Activated CD8-positive, alpha-beta T cell treated with anti-CD3 and anti-CD28 coated beads for 36 hours (primary cell): ENCODE measurements at regions of chr2 and their contacts with region 1.

Region 1: DNA sequence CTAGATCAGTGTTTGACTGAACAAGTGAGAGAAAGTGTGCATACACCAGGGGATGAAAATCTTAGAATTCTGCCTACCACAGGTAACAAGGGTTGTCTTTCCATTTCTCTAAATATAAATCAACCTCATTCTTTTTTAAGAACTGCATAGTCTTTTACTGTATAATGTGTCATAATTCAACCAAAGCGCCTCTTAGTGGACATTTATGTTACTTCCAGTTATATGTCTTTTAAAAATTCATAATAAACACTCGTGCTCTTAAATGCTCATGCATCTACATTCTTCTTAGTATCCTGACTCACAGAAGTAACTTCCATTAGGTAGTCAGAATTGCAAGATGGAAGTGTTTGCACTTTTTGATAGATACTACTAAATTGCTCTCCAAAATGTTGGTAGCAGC is 76.2 kb downstream of the CHRNA1 start:
- DNase-seq: no peak
- ATAC-seq: peak; percentile 69
- H3K4me3 Mint-ChIP-seq: no peak overlapping the region
- H3K27ac Mint-ChIP-seq: no peak overlapping the region
- H3K4me1 Mint-ChIP-seq: peaks cover 42% of the 10 kb centered on the region
- H3K27me3 Mint-ChIP-seq: peaks cover 1% of the 10 kb centered on the region
- CTCF ChIP-seq: peak; percentile 73

Region 2: GRCh38 chr2:174546581-174547506 is 141.2 kb before region 1 on chr2:
- CTCF ChIA-PET with region 1: interaction called, 10 read pairs
- POLR2A ChIA-PET with region 1: no interaction called
- intact Hi-C with region 1: no loop called
- DNase-seq: peak; percentile 69
- ATAC-seq: peak; percentile 81
- H3K4me3 Mint-ChIP-seq: no peak overlapping the region
- H3K27ac Mint-ChIP-seq: no peak overlapping the region
- H3K4me1 Mint-ChIP-seq: peaks cover 21% of the 10 kb centered on the region
- H3K27me3 Mint-ChIP-seq: no peaks in the 10 kb centered on the region
- CTCF ChIP-seq: peak; percentile 50

Region 3: DNA sequence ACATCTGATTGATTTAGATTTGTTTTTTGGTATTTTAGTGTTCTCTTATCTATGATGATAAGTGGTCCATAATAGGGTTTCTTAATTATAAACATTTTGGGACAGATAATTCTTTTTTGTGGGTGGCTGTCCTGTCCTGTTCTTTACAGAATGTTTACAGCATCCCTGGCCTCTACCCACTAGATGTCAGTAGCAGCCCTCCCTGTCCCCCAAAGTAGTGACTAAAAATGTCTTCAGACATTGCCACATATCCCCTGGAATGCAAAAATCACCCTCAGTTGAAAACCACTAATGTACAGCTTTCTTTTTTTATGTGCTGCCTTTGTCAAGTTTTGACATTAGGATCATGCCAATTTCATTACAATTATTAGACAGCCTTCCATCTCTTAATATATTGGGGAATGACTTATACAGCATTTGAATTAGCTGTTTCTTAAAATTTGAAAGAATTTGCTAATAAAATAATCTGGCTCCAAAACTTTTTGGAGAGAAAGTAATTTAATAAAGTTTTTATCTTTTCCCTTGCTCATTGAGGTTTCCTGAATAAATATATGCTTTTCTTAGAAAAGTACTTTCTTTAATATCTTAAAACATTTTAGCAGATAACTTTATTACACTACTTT is 110.0 kb before region 1 on chr2:
- CTCF ChIA-PET with region 1: interaction called, 143 read pairs
- POLR2A ChIA-PET with region 1: interaction called, 5 read pairs
- intact Hi-C with region 1: loop called (anchors 2 kb)
- DNase-seq: peak; percentile 71
- ATAC-seq: peak; percentile 71
- H3K4me3 Mint-ChIP-seq: no peak overlapping the region
- H3K27ac Mint-ChIP-seq: peak overlapping the region; percentile 49
- H3K4me1 Mint-ChIP-seq: peaks cover 75% of the 10 kb centered on the region
- H3K27me3 Mint-ChIP-seq: no peaks in the 10 kb centered on the region
- CTCF ChIP-seq: peak; percentile 63

Region 4: DNA sequence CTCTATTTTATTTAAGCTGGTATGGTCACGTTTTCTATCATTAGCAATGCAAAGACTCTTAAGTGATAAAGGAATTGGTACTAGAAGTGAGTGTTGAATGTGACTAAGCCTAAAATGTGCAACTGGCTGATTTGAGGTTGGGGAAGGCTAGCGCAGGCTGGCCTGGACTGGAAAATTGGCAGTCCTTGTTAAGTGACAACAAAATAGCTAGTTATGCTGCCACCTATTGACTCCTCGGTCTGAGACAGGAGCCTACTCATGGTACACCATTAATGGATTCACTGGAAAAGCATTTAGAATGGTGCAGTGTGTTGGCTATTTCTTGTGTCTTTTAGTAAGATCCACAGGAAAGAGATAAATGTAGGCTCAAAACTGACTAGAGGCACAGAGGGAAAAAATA is 84.8 kb before region 1 on chr2:
- CTCF ChIA-PET with region 1: interaction called, 70 read pairs
- POLR2A ChIA-PET with region 1: interaction called, 43 read pairs
- intact Hi-C with region 1: loop called (anchors 5 kb)
- DNase-seq: peak; percentile 79
- ATAC-seq: peak; percentile 61
- H3K4me3 Mint-ChIP-seq: no peak overlapping the region
- H3K27ac Mint-ChIP-seq: peak overlapping the region; percentile 77
- H3K4me1 Mint-ChIP-seq: peaks cover 91% of the 10 kb centered on the region
- H3K27me3 Mint-ChIP-seq: no peaks in the 10 kb centered on the region
- CTCF ChIP-seq: peak; percentile 76

Region 5: DNA sequence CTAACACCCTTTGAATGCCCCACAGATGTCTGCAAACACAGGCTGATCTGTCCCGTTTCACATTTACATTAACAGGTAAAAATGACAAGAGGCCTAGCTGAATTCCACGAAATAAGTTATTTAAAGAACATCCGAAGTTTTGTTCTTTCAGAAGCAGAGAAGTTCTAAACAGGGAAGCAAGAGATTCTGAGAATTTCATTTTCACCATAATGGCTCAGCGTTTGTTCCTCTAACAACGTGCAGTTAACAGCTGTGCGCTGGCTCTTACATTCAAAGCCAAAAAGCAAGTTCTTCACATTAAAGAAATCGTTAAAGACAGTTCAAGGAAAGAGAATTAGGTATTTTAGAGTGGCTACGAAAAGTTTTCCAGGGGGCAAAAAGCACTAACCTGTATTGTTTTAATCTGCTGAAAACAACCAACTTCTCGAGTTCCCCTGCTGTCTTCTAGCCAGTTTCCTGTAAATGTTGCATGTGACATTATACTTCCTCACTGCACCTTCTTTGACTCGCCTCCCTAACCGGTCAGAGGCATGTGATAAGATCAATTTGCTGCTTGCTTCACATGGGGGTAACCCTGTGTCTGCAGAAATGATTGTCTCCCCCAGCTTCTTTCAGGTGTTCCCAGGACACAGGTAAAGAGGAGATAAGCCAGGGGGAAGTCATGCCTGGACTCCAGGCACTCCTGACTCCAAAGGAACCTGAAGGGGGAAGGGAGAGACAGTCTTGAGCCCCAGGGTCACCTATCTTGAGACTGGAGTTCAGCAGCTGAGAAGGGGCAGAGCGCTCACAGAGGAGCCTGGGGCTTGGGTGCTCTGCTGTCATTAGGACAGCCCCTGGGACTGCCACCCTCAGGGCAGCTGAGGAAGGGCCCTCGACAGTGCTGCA is 53.7 kb before region 1 on chr2:
- CTCF ChIA-PET with region 1: interaction called, 28 read pairs
- POLR2A ChIA-PET with region 1: interaction called, 15 read pairs
- intact Hi-C with region 1: no loop called
- DNase-seq: peak; percentile 77
- ATAC-seq: peak; percentile 80
- H3K4me3 Mint-ChIP-seq: peak overlapping the region; percentile 85
- H3K27ac Mint-ChIP-seq: peak overlapping the region; percentile 99
- H3K4me1 Mint-ChIP-seq: peaks cover 60% of the 10 kb centered on the region
- H3K27me3 Mint-ChIP-seq: no peaks in the 10 kb centered on the region
- CTCF ChIP-seq: no peak

Region 6: DNA sequence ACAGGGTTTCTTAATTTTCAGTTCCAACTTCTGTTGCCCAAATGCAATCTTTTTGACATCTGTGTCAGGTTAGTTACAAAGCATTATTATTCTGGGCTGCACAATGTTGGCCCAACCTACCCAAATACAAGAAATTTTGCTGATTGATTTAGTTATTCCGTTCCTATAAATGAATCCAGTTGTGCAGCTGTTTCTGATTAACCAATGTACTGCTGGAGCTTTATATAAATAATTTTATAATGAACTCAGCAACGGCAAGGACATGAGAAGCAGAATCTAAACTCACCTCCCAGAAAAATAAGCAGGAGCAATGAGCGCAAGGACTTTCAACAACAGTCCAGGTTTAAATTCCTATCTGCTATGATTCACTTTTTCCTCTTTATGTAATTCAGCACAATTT is 14.2 kb before region 1 on chr2:
- CTCF ChIA-PET with region 1: interaction called, 19 read pairs
- POLR2A ChIA-PET with region 1: no interaction called
- intact Hi-C with region 1: no loop called
- DNase-seq: no peak
- ATAC-seq: no peak
- H3K4me3 Mint-ChIP-seq: no peak overlapping the region
- H3K27ac Mint-ChIP-seq: no peak overlapping the region
- H3K4me1 Mint-ChIP-seq: peaks cover 30% of the 10 kb centered on the region
- H3K27me3 Mint-ChIP-seq: no peaks in the 10 kb centered on the region
- CTCF ChIP-seq: no peak